OCI-LY7 (cell line): ENCODE measurements at regions of chr12 and their contacts with region 1.

Region 1: DNA sequence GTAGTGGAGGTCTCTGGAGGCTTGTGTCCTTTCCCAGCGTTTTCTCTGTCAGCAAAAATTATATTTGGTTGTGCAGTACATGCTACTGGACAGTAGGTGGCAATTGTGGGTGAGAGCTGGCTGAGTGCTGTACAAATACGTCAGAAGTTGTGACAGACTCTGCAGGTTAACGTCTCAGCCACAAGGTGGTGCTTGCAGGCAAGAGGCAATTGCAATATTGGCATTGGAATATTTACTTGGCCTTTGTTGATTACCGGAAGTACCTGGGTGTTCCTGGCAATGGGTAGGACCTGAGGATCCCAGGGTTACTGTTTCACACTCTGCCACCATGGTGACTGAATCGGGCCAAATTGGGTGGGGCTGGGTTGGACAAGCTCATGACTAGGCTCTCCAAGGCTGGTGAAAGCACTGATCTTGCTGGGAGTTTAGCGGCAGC is 333.9 kb upstream of the LMO3 start:
- DNase-seq: peak; percentile 86
- H3K4me3 ChIP-seq: no peak overlapping the region
- H3K27ac ChIP-seq: no peak overlapping the region
- H3K4me1 ChIP-seq: no peaks in the 10 kb centered on the region
- CTCF ChIP-seq: peak; percentile 99

Region 2: DNA sequence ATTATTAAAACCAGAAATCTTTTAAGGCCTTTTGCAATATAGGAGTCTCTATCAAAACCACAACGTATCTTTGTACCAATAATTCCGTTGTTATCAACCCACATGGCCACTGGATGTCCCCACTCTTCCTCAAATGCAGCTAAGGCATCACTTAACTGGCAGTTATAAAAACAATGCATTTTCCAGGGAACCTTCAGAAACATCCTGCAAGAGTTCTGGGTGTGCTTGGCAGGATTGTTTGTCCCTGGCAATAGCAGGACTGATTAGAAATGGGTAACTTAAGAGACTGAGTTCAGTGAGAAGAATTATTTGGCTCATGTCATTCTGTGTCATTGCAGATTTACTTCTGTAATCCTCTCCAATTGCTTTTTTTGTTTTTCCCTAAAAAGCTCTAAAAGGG is 774.4 kb before region 1 on chr12:
- CTCF ChIA-PET with region 1: no interaction called
- POLR2A ChIA-PET with region 1: no interaction called
- intact Hi-C with region 1: loop called (anchors 10 kb)
- DNase-seq: peak; percentile 72
- H3K4me3 ChIP-seq: no peak overlapping the region
- H3K27ac ChIP-seq: no peak overlapping the region
- H3K4me1 ChIP-seq: peaks cover 17% of the 10 kb centered on the region
- CTCF ChIP-seq: peak; percentile 91

Region 3: DNA sequence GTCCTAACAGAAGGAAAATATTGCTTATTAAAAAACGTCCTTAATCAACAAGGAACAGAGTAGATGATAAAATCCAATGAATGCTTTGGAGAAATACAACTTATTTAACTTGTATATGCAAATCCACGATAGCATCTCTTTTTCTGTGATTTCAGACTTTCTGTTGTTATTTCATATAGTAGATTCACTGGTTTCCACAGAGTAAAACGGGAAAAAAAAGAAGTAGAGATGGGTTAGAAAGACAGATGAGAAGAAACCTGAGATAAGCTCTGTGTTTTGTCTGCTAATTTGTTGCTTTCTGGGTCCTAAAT is 702.4 kb after region 1 on chr12:
- CTCF ChIA-PET with region 1: no interaction called
- POLR2A ChIA-PET with region 1: no interaction called
- intact Hi-C with region 1: loop called (anchors 2 kb)
- DNase-seq: no peak
- H3K4me3 ChIP-seq: no peak overlapping the region
- H3K27ac ChIP-seq: no peak overlapping the region
- H3K4me1 ChIP-seq: no peaks in the 10 kb centered on the region
- CTCF ChIP-seq: peak; percentile 43; the same call in 1 of the 2 replicates